Activated CD4-positive, alpha-beta T cell treated with anti-CD3 and anti-CD28 coated beads for 36 hours (primary cell): ENCODE measurements at regions of chr6 and their contacts with region 1.

Region 1: DNA sequence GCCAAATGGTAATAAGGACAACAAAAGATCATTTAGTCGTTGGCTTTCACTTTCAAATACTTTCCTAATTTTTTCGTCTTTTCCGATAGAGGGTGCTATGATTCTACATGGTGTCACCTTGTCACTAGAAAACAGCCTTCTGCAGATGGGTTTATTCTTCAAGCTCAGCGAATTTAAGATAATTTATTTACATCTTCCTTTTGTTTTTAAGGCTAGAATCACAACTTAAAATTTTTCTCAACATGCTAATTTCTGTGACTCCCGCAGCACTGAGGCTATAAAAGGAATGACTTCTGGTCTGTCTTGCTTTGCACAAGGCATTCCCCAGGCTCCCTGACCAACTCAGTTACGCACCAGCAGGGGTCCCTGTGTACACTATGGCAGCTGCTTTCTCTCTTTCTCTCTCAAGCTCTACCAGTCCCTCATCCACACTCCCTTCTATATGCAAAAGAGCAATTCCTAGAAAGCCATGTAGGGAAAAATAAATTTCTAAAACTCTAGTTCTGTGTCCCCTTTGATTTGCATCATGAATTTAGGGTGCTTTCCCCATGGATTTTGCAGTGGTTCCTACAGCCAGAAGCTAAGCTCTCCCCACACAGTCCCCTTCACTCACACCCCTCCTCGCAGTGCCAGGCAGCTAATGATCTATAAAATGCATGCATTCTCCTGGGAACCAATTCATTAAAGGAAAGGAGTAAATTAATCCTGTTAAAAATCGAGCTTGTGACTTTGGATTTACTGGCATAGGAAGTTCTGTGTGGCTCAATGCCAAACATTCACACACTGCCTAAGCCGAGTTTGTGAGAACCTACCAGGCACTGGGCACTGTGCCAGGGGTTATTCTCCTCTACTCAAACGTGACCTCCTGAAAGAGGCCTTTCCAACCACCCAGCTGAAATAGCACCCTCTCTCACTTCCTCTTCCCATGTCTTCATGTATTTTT is 74.5 kb downstream of the DCDC2 start:
- DNase-seq: peak; percentile 68
- ATAC-seq: peak; percentile 89
- H3K4me3 Mint-ChIP-seq: no peak overlapping the region
- H3K27ac Mint-ChIP-seq: no peak overlapping the region
- H3K4me1 Mint-ChIP-seq: peaks cover 6% of the 10 kb centered on the region
- H3K27me3 Mint-ChIP-seq: peaks cover 12% of the 10 kb centered on the region

Region 2: DNA sequence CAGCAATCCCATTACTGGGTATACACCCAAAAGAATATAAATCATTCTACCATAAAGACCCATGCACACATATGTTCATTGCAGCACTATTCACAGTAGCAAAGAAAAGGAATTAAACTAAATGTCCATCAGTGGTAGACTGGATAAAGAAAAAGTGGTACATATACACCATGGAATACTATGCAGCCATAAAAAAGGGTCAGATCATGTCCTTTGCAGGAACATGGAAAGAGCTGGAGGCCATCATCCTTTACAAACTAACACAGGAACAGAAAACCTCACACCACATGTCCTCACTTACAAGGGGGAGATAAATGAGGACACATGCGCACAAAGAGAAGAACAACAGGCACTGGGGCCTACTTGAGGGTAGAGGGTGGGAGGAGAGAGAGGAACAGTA is 13.6 kb after region 1 on chr6:
- CTCF ChIA-PET with region 1: interaction called, 10 read pairs
- POLR2A ChIA-PET with region 1: no interaction called
- intact Hi-C with region 1: no loop called
- DNase-seq: no peak
- ATAC-seq: no peak
- H3K4me3 Mint-ChIP-seq: no peak overlapping the region
- H3K27ac Mint-ChIP-seq: no peak overlapping the region
- H3K4me1 Mint-ChIP-seq: no peaks in the 10 kb centered on the region
- H3K27me3 Mint-ChIP-seq: peaks cover 13% of the 10 kb centered on the region

Region 3: GRCh38 chr6:24394780-24395437 is 111.6 kb after region 1 on chr6:
- CTCF ChIA-PET with region 1: interaction called, 9 read pairs
- POLR2A ChIA-PET with region 1: no interaction called
- intact Hi-C with region 1: loop called in 1 of 2 experiments (anchors 5 kb)
- DNase-seq: no peak
- ATAC-seq: no peak
- H3K4me3 Mint-ChIP-seq: no peak overlapping the region
- H3K27ac Mint-ChIP-seq: no peak overlapping the region
- H3K4me1 Mint-ChIP-seq: no peaks in the 10 kb centered on the region
- H3K27me3 Mint-ChIP-seq: peaks cover 13% of the 10 kb centered on the region

Region 4: GRCh38 chr6:24520929-24521546 is 237.7 kb after region 1 on chr6:
- CTCF ChIA-PET with region 1: no interaction called
- POLR2A ChIA-PET with region 1: no interaction called
- intact Hi-C with region 1: loop called in 1 of 2 experiments (anchors 1 kb)
- DNase-seq: peak; percentile 65
- ATAC-seq: peak; percentile 88
- H3K4me3 Mint-ChIP-seq: no peak overlapping the region
- H3K27ac Mint-ChIP-seq: no peak overlapping the region
- H3K4me1 Mint-ChIP-seq: peaks cover 7% of the 10 kb centered on the region
- H3K27me3 Mint-ChIP-seq: no peaks in the 10 kb centered on the region

Region 5: GRCh38 chr6:24699521-24700359 is 416.4 kb after region 1 on chr6:
- CTCF ChIA-PET with region 1: interaction called, 4 read pairs
- POLR2A ChIA-PET with region 1: no interaction called
- intact Hi-C with region 1: loop called in 1 of 2 experiments (anchors 5 kb)
- DNase-seq: no peak
- ATAC-seq: peak; percentile 89
- H3K4me3 Mint-ChIP-seq: no peak overlapping the region
- H3K27ac Mint-ChIP-seq: peak overlapping the region; percentile 89
- H3K4me1 Mint-ChIP-seq: peaks cover 68% of the 10 kb centered on the region
- H3K27me3 Mint-ChIP-seq: no peaks in the 10 kb centered on the region